ENCODE measurements at regions of chr11 and their contacts with region 1.

Region 1: GRCh38 chr11:7986768-7987559 is at the start of gene EIF3F:
- H3K4me3 Mint-ChIP-seq: peak within 1 kb of the TSS; percentile 95
- H3K27ac Mint-ChIP-seq: peak within 1 kb of the TSS; percentile 83
- H3K4me1 Mint-ChIP-seq: peaks cover 39% of the 10 kb centered on the region
- H3K27me3 Mint-ChIP-seq: peaks cover 12% of the 10 kb centered on the region

Region 2: DNA sequence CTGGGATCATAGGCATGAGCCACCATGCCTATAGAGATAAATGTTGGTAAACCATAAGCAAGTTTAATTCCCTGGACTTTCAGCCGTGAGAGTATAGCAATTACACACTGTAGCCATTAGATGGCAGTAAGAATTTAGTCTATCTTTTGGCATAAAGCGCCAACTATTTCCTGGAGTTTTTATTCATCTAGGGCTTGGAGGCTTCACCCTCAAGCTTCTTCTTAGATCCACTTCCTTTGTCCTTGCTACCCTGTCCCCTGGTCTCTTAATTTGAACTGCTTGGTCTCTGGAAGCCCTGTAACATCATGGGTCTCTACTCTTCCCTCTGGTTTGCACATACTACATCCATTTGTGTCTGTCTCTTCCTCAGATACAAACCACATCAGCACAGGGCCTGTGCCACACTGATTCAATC is 94.1 kb before region 1 on chr11:
- intact Hi-C with region 1: loop called (anchors 2 kb)
- H3K4me3 Mint-ChIP-seq: no peak overlapping the region
- H3K27ac Mint-ChIP-seq: no peak overlapping the region
- H3K4me1 Mint-ChIP-seq: no peaks in the 10 kb centered on the region
- H3K27me3 Mint-ChIP-seq: peaks cover 18% of the 10 kb centered on the region